Activated CD4-positive, alpha-beta memory T cell treated with anti-CD3 and anti-CD28 coated beads for 36 hours (primary cell): ENCODE measurements at regions of chr5 and their contacts with region 1.

Region 1: GRCh38 chr5:87008751-87009560 is 258.7 kb upstream of the RASA1 start:
- DNase-seq: no peak
- H3K4me3 Mint-ChIP-seq: no peak overlapping the region
- H3K27ac Mint-ChIP-seq: no peak overlapping the region
- H3K4me1 Mint-ChIP-seq: no peaks in the 10 kb centered on the region
- H3K27me3 Mint-ChIP-seq: no peaks in the 10 kb centered on the region

Region 2: DNA sequence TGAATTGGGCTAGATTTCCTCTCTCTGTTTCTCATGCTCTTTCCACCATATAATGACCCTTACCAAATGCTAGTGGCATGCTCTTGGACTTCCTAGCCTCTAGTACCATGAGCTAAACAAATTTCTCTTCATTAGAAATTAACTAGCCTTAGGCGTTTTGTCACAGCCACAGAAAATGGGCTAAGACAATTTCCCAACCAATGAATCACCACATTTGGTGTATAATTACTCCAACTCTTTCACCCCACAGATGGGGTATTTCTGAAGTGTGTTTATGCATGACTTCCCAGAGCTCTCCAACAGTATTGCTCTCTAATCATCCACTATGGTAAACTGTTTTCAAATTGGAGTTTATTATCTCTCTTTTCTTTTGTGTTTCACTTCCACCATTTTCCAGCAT is 1432.3 kb before region 1 on chr5:
- CTCF ChIA-PET with region 1: no interaction called
- POLR2A ChIA-PET with region 1: no interaction called
- intact Hi-C with region 1: no loop called
- DNase-seq: no peak
- H3K4me3 Mint-ChIP-seq: no peak overlapping the region
- H3K27ac Mint-ChIP-seq: no peak overlapping the region
- H3K4me1 Mint-ChIP-seq: no peaks in the 10 kb centered on the region
- H3K27me3 Mint-ChIP-seq: no peaks in the 10 kb centered on the region

Region 3: DNA sequence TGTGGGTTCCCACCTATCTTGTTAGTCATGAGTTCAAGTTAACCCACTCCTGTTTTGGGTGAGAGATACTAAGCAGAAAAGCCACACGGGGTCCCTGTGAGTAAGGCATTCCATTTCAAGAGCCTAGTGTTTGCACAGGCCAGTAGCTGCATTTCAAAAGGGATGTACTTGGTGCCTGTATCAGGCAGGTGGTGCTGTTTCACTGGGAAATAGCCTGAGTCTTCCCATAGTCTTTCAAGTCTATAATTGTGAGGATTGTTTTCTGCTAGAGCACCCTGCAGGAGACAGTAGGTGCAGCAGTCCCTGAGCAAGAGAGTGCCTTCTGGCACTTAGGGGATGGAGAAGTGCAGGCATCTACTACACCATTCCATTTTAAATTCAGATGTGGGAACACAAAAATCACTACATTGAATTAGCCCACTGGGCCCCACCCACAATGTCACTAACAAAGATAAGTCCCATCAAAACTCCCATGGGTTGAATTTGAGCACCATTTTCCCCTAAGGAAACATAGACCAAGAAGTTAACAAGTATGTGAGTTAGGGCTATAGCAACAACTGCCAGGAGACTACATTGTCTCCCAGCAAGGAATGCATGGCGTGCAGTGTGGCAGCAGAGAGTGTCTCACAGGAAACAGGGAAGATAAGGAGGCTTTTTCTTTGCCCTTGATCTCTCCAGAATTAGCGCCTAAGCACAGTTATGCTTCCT is 128.0 kb before region 1 on chr5:
- CTCF ChIA-PET with region 1: interaction called, 32 read pairs
- POLR2A ChIA-PET with region 1: no interaction called
- intact Hi-C with region 1: loop called (anchors 1 kb)
- DNase-seq: peak; percentile 57
- H3K4me3 Mint-ChIP-seq: no peak overlapping the region
- H3K27ac Mint-ChIP-seq: no peak overlapping the region
- H3K4me1 Mint-ChIP-seq: no peaks in the 10 kb centered on the region
- H3K27me3 Mint-ChIP-seq: peaks cover 4% of the 10 kb centered on the region

Region 4: DNA sequence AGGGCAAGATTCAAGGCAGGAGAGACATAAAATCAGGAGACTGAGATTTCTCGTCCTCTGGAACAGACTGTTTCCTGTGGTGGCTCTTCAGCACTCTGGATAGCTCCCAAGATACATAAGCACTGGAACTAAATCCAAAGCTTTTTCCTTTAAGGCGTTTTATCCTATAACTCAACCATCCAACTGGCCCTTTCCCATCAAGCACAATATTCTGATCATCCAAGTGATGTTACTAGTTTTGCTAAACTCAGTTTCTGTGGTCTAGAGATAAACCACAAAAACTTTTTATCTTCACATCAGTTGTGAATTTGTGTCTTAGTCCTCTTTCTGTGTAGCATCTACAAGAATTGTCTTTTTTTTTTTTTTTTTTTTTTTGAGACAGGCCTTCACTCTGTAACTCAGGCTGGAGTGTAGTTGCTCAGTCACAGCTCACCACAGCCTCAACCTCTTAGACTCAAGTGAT is 91.8 kb before region 1 on chr5:
- CTCF ChIA-PET with region 1: no interaction called
- POLR2A ChIA-PET with region 1: no interaction called
- intact Hi-C with region 1: no loop called
- DNase-seq: peak; percentile 18
- H3K4me3 Mint-ChIP-seq: no peak overlapping the region
- H3K27ac Mint-ChIP-seq: no peak overlapping the region
- H3K4me1 Mint-ChIP-seq: peaks cover 13% of the 10 kb centered on the region
- H3K27me3 Mint-ChIP-seq: peaks cover 4% of the 10 kb centered on the region